HCT116 (cell line): ENCODE measurements at regions of chr5 and their contacts with region 1.

Region 1: DNA sequence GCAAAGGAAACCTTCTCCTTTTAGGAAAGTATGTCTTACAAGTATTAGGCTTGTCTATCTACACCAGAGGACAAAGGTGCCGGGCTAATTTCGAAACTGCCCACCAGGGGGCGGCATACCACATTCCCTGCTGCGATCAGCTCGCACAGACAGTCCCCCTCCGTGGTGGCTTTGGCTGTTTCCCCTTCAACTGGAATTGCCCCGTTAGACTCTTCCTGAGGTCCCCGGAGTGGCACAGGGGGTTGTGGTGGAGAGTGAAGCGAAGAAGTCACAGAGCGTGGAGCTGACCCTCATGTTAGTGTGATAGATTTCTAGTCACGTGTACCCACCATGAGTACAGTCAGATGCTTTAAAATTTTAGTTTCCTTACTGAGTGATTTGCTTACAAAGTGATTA is 17.5 kb downstream of the PTTG1 start:
- DNase-seq: peak; percentile 66
- ATAC-seq: peak; percentile 93
- H3K4me3 ChIP-seq: peak overlapping the region; percentile 36 to 51
- H3K27ac ChIP-seq: no peak overlapping the region
- H3K4me1 ChIP-seq: peaks cover 0 to 15% of the 10 kb centered on the region in 2 experiments; a peak in 1 of 4 replicates
- H3K27me3 ChIP-seq: no peaks in the 10 kb centered on the region
- CTCF ChIP-seq: peak; percentile 54 to 94 (median 90)
- POLR2A ChIP-seq: no peak
- RAD21 ChIP-seq: peak; percentile 58

Region 2: DNA sequence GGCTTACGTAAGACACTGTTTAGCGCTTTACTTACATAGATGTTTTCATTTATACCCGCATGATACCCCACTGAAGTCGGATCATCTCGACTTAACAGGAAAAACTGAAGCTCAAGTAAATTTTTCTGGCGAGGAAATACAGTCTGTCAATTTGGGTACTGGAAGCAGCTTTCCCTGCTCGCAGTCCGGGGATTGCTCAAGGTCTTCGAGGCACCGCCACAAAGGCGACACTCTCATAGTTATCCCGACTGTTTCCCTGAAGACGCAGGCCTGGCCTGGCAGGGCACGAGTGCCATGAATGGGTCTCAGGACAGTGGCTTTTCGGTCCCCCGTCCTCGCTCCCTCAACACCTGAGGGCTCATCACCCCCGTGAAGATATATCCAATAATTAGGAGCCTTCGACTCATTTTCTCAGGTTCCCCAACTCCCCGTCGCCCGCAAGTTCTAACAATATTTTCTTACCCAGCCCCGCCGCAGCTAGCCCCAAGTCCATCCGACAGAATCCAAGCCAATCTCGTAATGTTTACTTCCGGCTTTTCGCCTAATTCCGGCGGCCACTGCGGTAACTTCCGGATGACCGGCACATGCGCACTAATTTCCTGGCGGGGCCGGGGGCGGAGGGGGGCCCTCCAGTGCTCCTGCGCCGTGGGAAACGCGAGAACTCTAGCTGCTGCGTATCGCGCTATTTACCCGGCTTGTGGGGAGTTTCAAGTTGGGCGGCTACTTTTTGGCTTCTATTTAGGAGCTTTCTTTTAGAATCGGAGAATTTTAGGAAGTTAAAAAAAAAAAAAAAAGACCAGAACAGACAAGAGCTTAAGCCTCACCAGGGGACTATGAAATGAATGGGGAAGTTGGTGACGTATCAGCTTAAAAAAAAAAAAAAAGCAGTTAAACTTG is 20.4 kb before region 1 on chr5 and contains the start of gene SLU7:
- CTCF ChIA-PET with region 1: interaction called, 21 read pairs
- POLR2A ChIA-PET with region 1: interaction called, 3 read pairs
- RAD21 ChIA-PET with region 1: no interaction called
- intact Hi-C with region 1: no loop called
- DNase-seq: peak; percentile 86
- ATAC-seq: peak; percentile 81
- H3K4me3 ChIP-seq: peak within 1 kb of the TSS; percentile 85 to 93
- H3K27ac ChIP-seq: peak within 1 kb of the TSS; percentile 50; the same call in 1 of the 2 replicates
- H3K4me1 ChIP-seq: peaks cover 8 to 27% of the 10 kb centered on the region in 2 experiments; a peak in 3 of 4 replicates
- H3K27me3 ChIP-seq: no peaks in the 10 kb centered on the region
- CTCF ChIP-seq: no peak
- POLR2A ChIP-seq: peak; percentile 72
- RAD21 ChIP-seq: no peak
- total RNA-seq, gene SLU7: 43.6 TPM

Region 3: DNA sequence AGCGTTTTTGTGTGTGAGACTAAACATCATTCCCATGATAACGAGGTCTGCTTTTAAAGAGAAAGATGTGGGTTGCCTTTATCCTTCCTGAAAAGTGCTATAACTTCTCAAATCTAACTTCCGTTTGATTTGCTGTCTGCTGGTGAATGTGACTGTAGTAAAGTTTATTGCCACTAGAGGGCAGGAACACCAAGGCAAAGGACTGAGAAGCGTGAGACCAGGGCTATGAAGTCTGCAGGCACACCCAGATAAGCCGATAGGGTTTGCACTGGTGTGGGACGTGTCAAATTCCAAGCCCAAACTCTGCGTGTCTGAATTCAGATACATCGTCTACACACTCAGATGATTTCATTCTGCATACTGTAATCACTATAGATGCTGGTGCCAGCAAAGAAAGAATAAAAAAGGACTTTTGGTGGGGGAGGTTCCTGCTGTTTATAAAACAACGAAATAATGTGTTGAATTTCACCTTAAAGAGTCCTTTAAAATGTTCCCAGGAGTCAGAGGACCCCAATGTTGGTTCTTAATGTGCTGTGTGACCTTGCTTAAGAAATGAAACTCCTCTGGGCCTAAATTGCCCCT is 69.7 kb after region 1 on chr5:
- CTCF ChIA-PET with region 1: interaction called, 18 read pairs
- POLR2A ChIA-PET with region 1: no interaction called
- RAD21 ChIA-PET with region 1: interaction called in 1 of 2 experiments, 3 read pairs
- intact Hi-C with region 1: no loop called
- DNase-seq: peak; percentile 73
- ATAC-seq: peak; percentile 95
- H3K4me3 ChIP-seq: no peak overlapping the region
- H3K27ac ChIP-seq: no peak overlapping the region
- H3K4me1 ChIP-seq: no peaks in the 10 kb centered on the region
- H3K27me3 ChIP-seq: peaks cover 23% of the 10 kb centered on the region
- CTCF ChIP-seq: peak; percentile 50 to 93 (median 73); a peak in 5 of 6 replicates
- POLR2A ChIP-seq: no peak
- RAD21 ChIP-seq: peak; percentile 91